Activated CD8-positive, alpha-beta T cell treated with anti-CD3 and anti-CD28 coated beads for 36 hours (primary cell): ENCODE measurements at regions of chr10 and their contacts with region 1.

Region 1: GRCh38 chr10:110918643-110919363 is at the start of gene BBIP1:
- DNase-seq: no peak
- ATAC-seq: peak; percentile 94
- H3K4me3 Mint-ChIP-seq: peak within 1 kb of the TSS; percentile 87
- H3K27ac Mint-ChIP-seq: peak within 1 kb of the TSS; percentile 98
- H3K4me1 Mint-ChIP-seq: peaks cover 39% of the 10 kb centered on the region
- H3K27me3 Mint-ChIP-seq: no peaks in the 10 kb centered on the region
- CTCF ChIP-seq: no peak
- total RNA-seq, gene BBIP1: 41.2 to 44.4 TPM

Region 2: GRCh38 chr10:110901954-110902819 is 16.6 kb before region 1 on chr10:
- CTCF ChIA-PET with region 1: interaction called, 18 read pairs
- POLR2A ChIA-PET with region 1: interaction called, 25 read pairs
- intact Hi-C with region 1: no loop called
- DNase-seq: peak; percentile 79
- ATAC-seq: peak; percentile 63
- H3K4me3 Mint-ChIP-seq: peak overlapping the region; percentile 20
- H3K27ac Mint-ChIP-seq: peak overlapping the region; percentile 90
- H3K4me1 Mint-ChIP-seq: peaks cover 51% of the 10 kb centered on the region
- H3K27me3 Mint-ChIP-seq: no peaks in the 10 kb centered on the region
- CTCF ChIP-seq: no peak

Region 3: GRCh38 chr10:110936757-110937156 is 18.0 kb after region 1 on chr10:
- CTCF ChIA-PET with region 1: no interaction called
- POLR2A ChIA-PET with region 1: no interaction called
- intact Hi-C with region 1: no loop called
- DNase-seq: no peak
- ATAC-seq: no peak
- H3K4me3 Mint-ChIP-seq: no peak overlapping the region
- H3K27ac Mint-ChIP-seq: no peak overlapping the region
- H3K4me1 Mint-ChIP-seq: peaks cover 31% of the 10 kb centered on the region
- H3K27me3 Mint-ChIP-seq: no peaks in the 10 kb centered on the region
- CTCF ChIP-seq: no peak

Region 4: DNA sequence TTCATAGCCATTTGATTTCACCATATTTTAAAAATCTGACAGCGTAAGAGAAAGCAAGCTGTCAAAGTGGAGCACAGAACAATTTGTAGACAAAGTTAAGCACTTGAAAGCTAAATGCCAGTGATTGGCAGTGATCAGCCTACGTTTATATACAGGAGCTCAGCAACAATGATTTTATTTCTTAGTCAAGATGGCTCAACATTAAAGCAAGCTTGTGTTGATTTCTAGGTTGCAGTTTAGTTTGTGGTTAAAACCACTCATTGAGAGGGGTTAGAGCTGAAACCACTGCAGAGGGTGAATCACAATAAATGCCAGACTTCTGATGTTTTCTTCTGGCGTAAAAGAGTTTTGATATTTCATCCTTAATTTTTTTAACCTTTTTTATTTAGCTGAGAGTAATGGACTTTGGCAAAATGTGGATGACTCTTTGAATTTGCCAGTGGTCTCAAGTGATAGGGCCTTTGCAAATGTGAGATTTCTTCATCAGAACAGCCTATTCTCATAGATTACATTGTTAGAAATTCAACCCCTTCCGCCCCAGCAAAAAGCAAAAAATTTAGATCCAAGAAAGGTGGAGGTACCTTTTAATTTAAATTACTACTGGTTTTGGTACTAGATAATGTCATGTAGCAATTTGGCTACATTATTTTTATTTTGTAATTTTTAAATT is 74.4 kb after region 1 on chr10:
- CTCF ChIA-PET with region 1: no interaction called
- POLR2A ChIA-PET with region 1: no interaction called
- intact Hi-C with region 1: loop called (anchors 5 kb)
- DNase-seq: peak; percentile 43
- ATAC-seq: peak; percentile 98
- H3K4me3 Mint-ChIP-seq: peak overlapping the region; percentile 48
- H3K27ac Mint-ChIP-seq: peak overlapping the region; percentile 46
- H3K4me1 Mint-ChIP-seq: peaks cover 44% of the 10 kb centered on the region
- H3K27me3 Mint-ChIP-seq: no peaks in the 10 kb centered on the region
- CTCF ChIP-seq: no peak

Region 5: GRCh38 chr10:111233439-111233838 is 314.6 kb after region 1 on chr10:
- CTCF ChIA-PET with region 1: no interaction called
- POLR2A ChIA-PET with region 1: no interaction called
- intact Hi-C with region 1: no loop called
- DNase-seq: peak; percentile 2
- ATAC-seq: no peak
- H3K4me3 Mint-ChIP-seq: no peak overlapping the region
- H3K27ac Mint-ChIP-seq: no peak overlapping the region
- H3K4me1 Mint-ChIP-seq: no peaks in the 10 kb centered on the region
- H3K27me3 Mint-ChIP-seq: peaks cover 15% of the 10 kb centered on the region
- CTCF ChIP-seq: no peak